MCF 10A (cell line): ENCODE measurements at regions of chr2 and their contacts with region 1.

Region 1: DNA sequence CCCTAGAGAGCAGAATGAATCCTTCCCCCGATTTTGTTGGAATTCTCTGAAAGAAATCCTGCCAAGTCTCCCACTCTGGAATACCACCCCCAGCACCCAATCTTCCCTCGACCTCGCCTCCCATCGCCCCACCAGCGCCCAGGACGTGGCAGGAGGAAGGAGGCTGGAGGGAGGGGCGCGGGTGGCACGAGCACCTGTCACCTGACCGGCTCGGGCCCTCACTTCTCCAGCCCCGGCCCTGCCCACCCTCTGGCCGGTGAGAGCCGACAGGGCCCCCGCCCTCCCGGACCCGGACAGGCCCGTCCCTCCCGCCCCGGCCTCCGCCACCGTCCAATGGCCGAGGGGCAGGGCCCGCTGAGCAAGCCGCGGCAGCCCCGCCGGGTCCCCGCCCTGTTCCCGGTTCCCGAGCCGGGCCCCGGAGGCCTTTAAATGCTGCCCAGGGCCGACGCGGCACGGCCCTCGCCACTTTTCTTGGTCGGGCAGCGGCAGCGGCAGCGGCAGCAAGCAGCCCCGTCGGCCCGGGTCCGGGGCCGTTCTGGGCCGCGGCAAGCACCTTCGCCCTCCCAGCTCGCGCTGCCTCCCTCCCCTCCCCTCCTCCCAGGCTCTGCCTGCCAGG is at the start of gene LGALSL:
- DNase-seq: peak; percentile 66
- H3K4me3 Mint-ChIP-seq: peak within 1 kb of the TSS; percentile 75
- H3K27ac Mint-ChIP-seq: peak within 1 kb of the TSS; percentile 86
- H3K4me1 Mint-ChIP-seq: peaks cover 16% of the 10 kb centered on the region
- H3K27me3 Mint-ChIP-seq: no peaks in the 10 kb centered on the region
- CTCF ChIP-seq: no peak
- total RNA-seq, gene LGALSL: 11.4 and 13.5 TPM in 2 replicates

Region 2: DNA sequence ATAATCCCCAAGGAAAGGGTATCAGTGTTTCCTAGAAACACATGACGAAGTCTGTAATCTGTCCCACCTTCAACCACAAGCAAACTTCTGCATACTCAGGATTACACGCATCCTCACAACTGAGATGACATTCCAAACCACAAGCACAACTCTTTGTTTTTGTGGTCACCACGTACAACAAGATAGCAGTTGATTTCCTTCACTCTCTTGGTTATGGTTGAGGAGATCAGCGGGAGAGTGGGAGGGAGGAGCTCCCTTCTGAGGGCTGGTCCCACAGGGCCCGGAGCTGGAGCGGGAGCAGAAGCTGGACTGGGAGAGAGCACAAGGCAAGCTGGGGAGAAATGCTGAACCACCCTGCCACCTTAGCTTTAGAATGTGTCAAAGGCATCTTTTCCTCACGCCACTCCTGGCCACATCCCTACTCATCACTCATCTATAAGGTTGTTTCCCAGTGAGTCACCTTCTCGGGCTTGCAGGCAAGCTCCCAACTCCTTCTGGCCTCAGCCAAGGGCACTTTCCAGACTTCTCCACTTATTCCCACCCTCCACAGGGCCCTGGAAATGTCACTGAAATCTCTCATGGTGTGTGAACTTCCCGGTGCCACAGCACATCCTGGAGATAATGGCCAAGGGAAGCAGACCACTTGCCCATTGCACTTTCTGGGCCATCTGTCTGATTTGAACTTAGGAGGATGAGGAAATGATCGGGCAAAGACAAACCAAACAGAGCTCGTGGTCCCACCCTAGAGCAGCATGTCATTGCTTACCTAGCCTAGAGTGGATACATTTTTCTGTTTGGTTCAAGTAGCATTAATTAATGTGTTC is 98.8 kb before region 1 on chr2:
- CTCF ChIA-PET with region 1: interaction called, 3 read pairs
- POLR2A ChIA-PET with region 1: interaction called, 18 read pairs
- intact Hi-C with region 1: no loop called
- DNase-seq: peak; percentile 84
- H3K4me3 Mint-ChIP-seq: no peak overlapping the region
- H3K27ac Mint-ChIP-seq: no peak overlapping the region
- H3K4me1 Mint-ChIP-seq: peaks cover 18% of the 10 kb centered on the region
- H3K27me3 Mint-ChIP-seq: no peaks in the 10 kb centered on the region
- CTCF ChIP-seq: no peak

Region 3: GRCh38 chr2:64359892-64360657 is 93.8 kb before region 1 on chr2:
- CTCF ChIA-PET with region 1: interaction called, 3 read pairs
- POLR2A ChIA-PET with region 1: interaction called, 18 read pairs
- intact Hi-C with region 1: no loop called
- DNase-seq: peak; percentile 97
- H3K4me3 Mint-ChIP-seq: peak overlapping the region; percentile 48
- H3K27ac Mint-ChIP-seq: peak overlapping the region; percentile 95
- H3K4me1 Mint-ChIP-seq: peaks cover 44% of the 10 kb centered on the region
- H3K27me3 Mint-ChIP-seq: no peaks in the 10 kb centered on the region
- CTCF ChIP-seq: no peak

Region 4: DNA sequence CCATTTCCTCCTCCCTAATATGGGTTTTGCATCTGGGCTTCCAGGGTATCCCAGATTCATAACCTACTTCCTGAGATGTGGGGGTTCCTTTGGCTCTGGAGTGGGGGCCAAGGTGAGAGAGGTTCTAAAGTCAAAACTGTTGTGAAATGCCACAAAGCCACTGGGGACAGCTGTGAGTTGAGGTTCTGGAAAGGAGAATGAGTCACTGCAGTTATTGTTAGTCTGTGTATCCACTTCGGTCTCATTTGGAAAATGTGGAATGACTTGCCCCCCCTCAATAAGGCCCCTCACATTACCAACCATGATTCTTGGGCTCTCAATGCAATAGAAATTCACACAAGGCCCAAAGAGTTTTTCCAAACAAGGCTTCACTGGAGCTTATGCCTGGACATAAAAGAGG is 51.0 kb before region 1 on chr2:
- CTCF ChIA-PET with region 1: no interaction called
- POLR2A ChIA-PET with region 1: no interaction called
- intact Hi-C with region 1: loop called (anchors 2 kb)
- DNase-seq: peak; percentile 66
- H3K4me3 Mint-ChIP-seq: no peak overlapping the region
- H3K27ac Mint-ChIP-seq: no peak overlapping the region
- H3K4me1 Mint-ChIP-seq: peaks cover 50% of the 10 kb centered on the region
- H3K27me3 Mint-ChIP-seq: no peaks in the 10 kb centered on the region
- CTCF ChIP-seq: no peak

Region 5: GRCh38 chr2:64532030-64532429 is 78.2 kb after region 1 on chr2:
- CTCF ChIA-PET with region 1: no interaction called
- POLR2A ChIA-PET with region 1: no interaction called
- intact Hi-C with region 1: no loop called
- DNase-seq: no peak
- H3K4me3 Mint-ChIP-seq: no peak overlapping the region
- H3K27ac Mint-ChIP-seq: no peak overlapping the region
- H3K4me1 Mint-ChIP-seq: peaks cover 26% of the 10 kb centered on the region
- H3K27me3 Mint-ChIP-seq: no peaks in the 10 kb centered on the region
- CTCF ChIP-seq: no peak

Region 6: GRCh38 chr2:65746931-65747675 is 1293.2 kb after region 1 on chr2:
- CTCF ChIA-PET with region 1: no interaction called
- POLR2A ChIA-PET with region 1: no interaction called
- intact Hi-C with region 1: no loop called
- DNase-seq: no peak
- H3K4me3 Mint-ChIP-seq: no peak overlapping the region
- H3K27ac Mint-ChIP-seq: no peak overlapping the region
- H3K4me1 Mint-ChIP-seq: no peaks in the 10 kb centered on the region
- H3K27me3 Mint-ChIP-seq: no peaks in the 10 kb centered on the region
- CTCF ChIP-seq: no peak